Psoas muscle (tissue), 8 donors: ENCODE measurements at regions of chr2 and their contacts with region 1.

Region 1: DNA sequence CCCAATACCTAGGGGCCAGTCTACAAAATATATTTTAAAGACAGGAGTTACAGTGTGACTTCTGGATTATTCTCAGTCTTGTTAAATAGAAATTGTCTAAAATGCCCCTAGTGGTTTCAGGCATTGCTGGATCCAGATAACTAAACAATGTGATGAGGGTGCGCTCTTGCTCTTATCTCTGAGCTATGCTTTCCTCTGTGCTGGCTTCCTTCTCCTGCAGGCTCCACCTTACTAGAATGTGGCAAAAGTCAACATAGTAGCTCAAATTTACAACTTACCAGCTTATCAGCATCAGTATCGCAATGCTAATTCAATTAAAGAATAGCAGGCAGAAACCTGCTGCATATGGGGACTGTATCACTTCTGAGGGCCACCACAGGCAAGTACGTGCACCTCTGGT is 61.3 kb upstream of the RNU4ATAC start:
- DNase-seq: no peak
- ATAC-seq: no peak
- H3K4me3 ChIP-seq: no peak overlapping the region
- H3K27ac ChIP-seq: no peak overlapping the region
- H3K4me1 ChIP-seq: peaks cover 16% of the 10 kb centered on the region
- H3K27me3 ChIP-seq: no peaks in the 10 kb centered on the region
- CTCF ChIP-seq: no peak

Region 2: GRCh38 chr2:121128754-121129659 is 340.3 kb before region 1 on chr2:
- intact Hi-C with region 1: no loop called
- DNase-seq: no peak
- ATAC-seq: peak in 2 of 4 donors; percentile 67 to 70
- H3K4me3 ChIP-seq: no peak overlapping the region
- H3K27ac ChIP-seq: no peak overlapping the region
- H3K4me1 ChIP-seq: no peaks in the 10 kb centered on the region
- H3K27me3 ChIP-seq: no peaks in the 10 kb centered on the region
- CTCF ChIP-seq: peak; percentile 43

Region 3: GRCh38 chr2:121400201-121400600 is 69.2 kb before region 1 on chr2:
- intact Hi-C with region 1: no loop called
- DNase-seq: no peak
- ATAC-seq: peak in 1 of 4 donors; percentile 26
- H3K4me3 ChIP-seq: no peak overlapping the region
- H3K27ac ChIP-seq: no peak overlapping the region
- H3K4me1 ChIP-seq: no peaks in the 10 kb centered on the region
- H3K27me3 ChIP-seq: no peaks in the 10 kb centered on the region
- CTCF ChIP-seq: no peak

Region 4: DNA sequence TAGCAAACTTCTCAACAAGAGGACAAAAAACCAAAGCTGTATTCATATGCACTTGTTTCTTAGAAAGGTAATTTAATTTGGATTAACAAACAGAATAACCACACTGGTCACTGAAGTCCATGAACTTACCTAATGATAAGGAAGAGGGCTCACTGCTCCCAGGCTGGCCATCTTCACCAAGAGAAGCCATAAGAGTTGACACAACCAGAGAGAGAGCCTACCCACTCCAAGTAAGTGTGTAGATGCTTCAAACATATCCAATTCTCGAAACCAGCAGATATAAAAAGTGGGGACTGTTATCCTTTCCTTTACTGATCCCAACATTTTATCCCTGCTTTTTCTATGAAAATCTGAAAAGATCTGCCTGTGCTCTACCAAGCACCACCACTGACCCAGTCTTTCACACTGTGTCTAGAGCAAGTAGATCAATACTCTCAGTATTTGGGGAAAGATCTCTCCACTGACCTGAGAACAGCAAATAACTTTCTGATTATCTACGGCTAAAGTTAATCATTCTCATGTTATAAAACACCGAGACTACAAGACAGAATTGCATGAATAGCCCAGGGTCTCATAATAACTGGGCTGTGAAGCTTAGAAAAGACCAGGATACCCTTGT is 50.2 kb before region 1 on chr2:
- intact Hi-C with region 1: no loop called
- DNase-seq: no peak
- ATAC-seq: no peak
- H3K4me3 ChIP-seq: no peak overlapping the region
- H3K27ac ChIP-seq: no peak overlapping the region
- H3K4me1 ChIP-seq: no peaks in the 10 kb centered on the region
- H3K27me3 ChIP-seq: no peaks in the 10 kb centered on the region
- CTCF ChIP-seq: no peak

Region 5: GRCh38 chr2:121429119-121429903 is 40.0 kb before region 1 on chr2:
- intact Hi-C with region 1: loop called in 1 of 2 experiments (anchors 5 kb)
- DNase-seq: no peak
- ATAC-seq: no peak
- H3K4me3 ChIP-seq: no peak overlapping the region
- H3K27ac ChIP-seq: no peak overlapping the region
- H3K4me1 ChIP-seq: no peaks in the 10 kb centered on the region
- H3K27me3 ChIP-seq: no peaks in the 10 kb centered on the region
- CTCF ChIP-seq: no peak